Posterior vena cava (tissue), 2 donors: ENCODE measurements at regions of chr4 and their contacts with region 1.

Region 1: GRCh38 chr4:110059556-110060191 is 138.7 kb downstream of the ELOVL6 start:
- DNase-seq: no peak

Region 2: GRCh38 chr4:108210989-108211835 is 1848.5 kb before region 1 on chr4:
- intact Hi-C with region 1: no loop called
- DNase-seq: no peak

Region 3: GRCh38 chr4:108247387-108248049 is 1812.2 kb before region 1 on chr4:
- intact Hi-C with region 1: no loop called
- DNase-seq: no peak

Region 4: DNA sequence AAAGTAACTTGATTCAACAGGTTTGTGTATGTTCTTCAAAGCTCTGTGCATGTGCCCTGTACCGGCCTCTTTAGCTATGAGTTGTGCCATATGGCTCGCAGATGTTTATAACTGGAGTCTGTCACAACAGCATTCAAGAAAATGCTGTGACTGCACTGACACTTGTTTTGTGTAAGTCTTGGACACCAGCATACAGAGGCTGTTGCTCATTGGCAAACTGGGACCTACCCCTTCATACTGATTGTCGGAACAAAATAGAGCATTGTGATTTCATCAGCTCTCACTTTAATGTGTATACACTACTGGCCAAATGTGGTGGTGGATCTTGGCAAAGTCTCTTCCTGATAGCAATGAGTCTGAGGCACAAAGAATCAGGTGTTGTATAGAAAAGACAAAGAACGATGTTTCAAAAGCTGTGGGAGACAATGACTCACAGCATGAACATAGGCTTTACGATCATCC is 13.1 kb before region 1 on chr4:
- intact Hi-C with region 1: no loop called
- DNase-seq: no peak

Region 5: GRCh38 chr4:111064342-111064993 is 1004.8 kb after region 1 on chr4:
- intact Hi-C with region 1: loop called in 1 of 2 experiments (anchors 10 kb)
- DNase-seq: no peak